ENCODE measurements at regions of chr12 and their contacts with region 1.

Region 1: GRCh38 chr12:7853557-7853956 is 19.2 kb downstream of the SLC2A14 start:
- DNase-seq: no peak
- H3K4me3 ChIP-seq: no peak overlapping the region
- H3K27ac ChIP-seq: no peak overlapping the region
- H3K4me1 ChIP-seq: 0 out of 2 replicates have a peak, but pooled peaks cover 4% of the 10 kb centered on the region
- H3K27me3 ChIP-seq: no peaks in the 10 kb centered on the region
- CTCF ChIP-seq: no peak

Region 2: GRCh38 chr12:7667125-7667524 is 186.4 kb before region 1 on chr12:
- CTCF ChIA-PET with region 1: no interaction called
- POLR2A ChIA-PET with region 1: no interaction called
- intact Hi-C with region 1: no loop called
- DNase-seq: peak in 1 of 2 experiments; percentile 39
- H3K4me3 ChIP-seq: no peak overlapping the region
- H3K27ac ChIP-seq: no peak overlapping the region
- H3K4me1 ChIP-seq: no peaks in the 10 kb centered on the region
- H3K27me3 ChIP-seq: no peaks in the 10 kb centered on the region
- CTCF ChIP-seq: peak; percentile 60

Region 3: GRCh38 chr12:7732993-7733392 is 120.6 kb before region 1 on chr12:
- CTCF ChIA-PET with region 1: no interaction called
- POLR2A ChIA-PET with region 1: interaction called, 11 read pairs
- intact Hi-C with region 1: no loop called
- DNase-seq: no peak
- H3K4me3 ChIP-seq: no peak overlapping the region
- H3K27ac ChIP-seq: no peak overlapping the region
- H3K4me1 ChIP-seq: no peaks in the 10 kb centered on the region
- H3K27me3 ChIP-seq: no peaks in the 10 kb centered on the region
- CTCF ChIP-seq: no peak

Region 4: GRCh38 chr12:7832059-7832696 is 21.4 kb before region 1 on chr12:
- CTCF ChIA-PET with region 1: interaction called, 11 read pairs
- POLR2A ChIA-PET with region 1: no interaction called
- intact Hi-C with region 1: no loop called
- DNase-seq: peak; percentile 48 to 56
- H3K4me3 ChIP-seq: no peak overlapping the region
- H3K27ac ChIP-seq: no peak overlapping the region
- H3K4me1 ChIP-seq: peaks cover 17% of the 10 kb centered on the region
- H3K27me3 ChIP-seq: no peaks in the 10 kb centered on the region
- CTCF ChIP-seq: peak; percentile 78

Region 5: DNA sequence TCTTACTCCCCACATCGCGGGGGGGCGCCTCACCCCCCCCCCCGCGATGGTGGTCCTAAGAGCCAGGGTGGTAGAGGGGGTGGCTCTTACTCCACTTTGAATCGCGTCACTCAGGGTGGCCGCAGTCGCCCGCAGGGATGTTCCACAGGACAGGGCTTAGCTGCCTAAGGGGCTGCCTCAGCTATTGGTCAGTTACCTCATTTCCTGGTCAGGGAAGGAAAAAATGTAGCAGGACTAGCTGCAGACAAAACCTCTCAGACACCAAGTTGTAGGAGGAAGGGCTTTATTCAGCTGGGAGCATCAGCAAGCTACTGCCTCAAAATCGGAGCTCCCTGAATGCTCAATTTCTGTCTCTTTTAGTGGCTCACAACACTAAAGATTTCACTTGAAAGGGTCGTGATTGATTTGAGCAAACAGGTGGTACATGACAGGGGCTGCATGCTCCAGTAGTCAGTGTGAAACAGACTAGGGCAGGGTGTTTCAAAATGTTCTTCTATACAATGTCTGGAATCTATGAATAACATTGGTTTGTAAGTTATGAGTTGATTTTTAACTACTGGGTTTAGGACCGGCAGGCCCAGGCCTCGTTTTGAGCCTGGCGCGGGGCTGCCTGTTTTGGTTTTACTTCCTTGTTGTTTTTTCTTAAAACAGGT is 595.9 kb after region 1 on chr12:
- CTCF ChIA-PET with region 1: no interaction called
- POLR2A ChIA-PET with region 1: interaction called, 18 read pairs
- intact Hi-C with region 1: no loop called
- DNase-seq: peak; percentile 30 to 58
- H3K4me3 ChIP-seq: no peak overlapping the region
- H3K27ac ChIP-seq: no peak overlapping the region
- H3K4me1 ChIP-seq: no peaks in the 10 kb centered on the region
- H3K27me3 ChIP-seq: peaks cover 5% of the 10 kb centered on the region; the same call in 1 of the 2 replicates
- CTCF ChIP-seq: no peak

Measured in PC-9 (cell line).